ENCODE measurements at regions of chr1 and their contacts with region 1.

Region 1: DNA sequence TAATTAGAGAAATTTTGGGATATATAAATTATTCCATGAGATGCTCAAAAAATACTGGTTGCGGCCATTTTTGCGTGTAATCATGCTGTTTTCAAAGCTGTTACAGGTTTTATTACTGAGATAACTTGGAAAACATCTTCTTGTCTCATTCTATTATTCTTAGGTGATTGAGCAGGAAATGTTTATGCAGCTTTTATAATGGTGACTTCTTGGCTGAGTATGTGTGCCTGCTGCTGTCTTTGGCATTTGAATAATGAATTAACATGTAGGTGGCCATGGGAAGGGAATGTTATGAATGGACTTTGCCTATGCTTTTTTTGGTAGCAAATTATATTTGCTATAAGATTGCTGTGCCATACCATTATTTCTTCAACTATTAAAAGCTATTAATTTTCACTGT is 52.5 kb downstream of the RASAL2 start:
- DNase-seq: no peak
- ATAC-seq: no peak
- H3K4me3 ChIP-seq: no peak overlapping the region
- H3K27ac ChIP-seq: no peak overlapping the region
- H3K4me1 ChIP-seq: peaks cover 3% of the 10 kb centered on the region
- H3K27me3 ChIP-seq: no peaks in the 10 kb centered on the region
- CTCF ChIP-seq: no peak
- POLR2A ChIP-seq: no peak
- RAD21 ChIP-seq: no peak

Region 2: DNA sequence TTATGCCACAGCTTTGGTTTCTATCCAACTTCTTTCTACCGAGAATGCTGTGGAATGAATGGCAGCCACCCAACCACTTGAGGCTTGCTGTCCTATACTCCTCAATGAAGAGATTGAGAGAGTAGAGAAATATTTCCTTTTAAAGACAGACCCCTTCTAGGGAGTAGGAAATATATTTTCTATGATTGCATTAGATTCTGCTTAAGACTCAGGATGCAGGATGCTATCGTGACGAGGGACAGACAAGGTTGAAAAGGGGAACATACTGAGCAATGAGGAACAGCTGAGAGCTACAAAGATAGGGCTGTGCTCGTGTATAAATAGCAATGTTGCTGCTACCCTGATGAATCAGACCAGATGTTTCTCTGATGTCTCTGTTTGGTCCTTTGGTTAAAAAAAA is 59.7 kb before region 1 on chr1:
- CTCF ChIA-PET with region 1: no interaction called
- POLR2A ChIA-PET with region 1: no interaction called
- dilution Hi-C with region 1: no loop called
- in situ Hi-C with region 1: no loop called
- intact Hi-C with region 1: no loop called
- DNase-seq: peak; percentile 75
- ATAC-seq: peak; percentile 94
- H3K4me3 ChIP-seq: no peak overlapping the region
- H3K27ac ChIP-seq: no peak overlapping the region
- H3K4me1 ChIP-seq: no peaks in the 10 kb centered on the region
- H3K27me3 ChIP-seq: no peaks in the 10 kb centered on the region
- CTCF ChIP-seq: no peak
- POLR2A ChIP-seq: no peak
- RAD21 ChIP-seq: no peak

Region 3: GRCh38 chr1:178109348-178110143 is 36.9 kb before region 1 on chr1:
- CTCF ChIA-PET with region 1: no interaction called
- POLR2A ChIA-PET with region 1: no interaction called
- dilution Hi-C with region 1: no loop called
- in situ Hi-C with region 1: no loop called
- intact Hi-C with region 1: loop called (anchors 5 kb)
- DNase-seq: peak; percentile 63
- ATAC-seq: peak; percentile 61
- H3K4me3 ChIP-seq: no peak overlapping the region
- H3K27ac ChIP-seq: no peak overlapping the region
- H3K4me1 ChIP-seq: peaks cover 5% of the 10 kb centered on the region
- H3K27me3 ChIP-seq: no peaks in the 10 kb centered on the region
- CTCF ChIP-seq: no peak
- POLR2A ChIP-seq: no peak
- RAD21 ChIP-seq: no peak

Region 4: GRCh38 chr1:178209935-178210334 is 63.5 kb after region 1 on chr1:
- CTCF ChIA-PET with region 1: no interaction called
- POLR2A ChIA-PET with region 1: no interaction called
- dilution Hi-C with region 1: no loop called
- in situ Hi-C with region 1: no loop called
- intact Hi-C with region 1: no loop called
- DNase-seq: no peak
- ATAC-seq: no peak
- H3K4me3 ChIP-seq: no peak overlapping the region
- H3K27ac ChIP-seq: no peak overlapping the region
- H3K4me1 ChIP-seq: no peaks in the 10 kb centered on the region
- H3K27me3 ChIP-seq: no peaks in the 10 kb centered on the region
- CTCF ChIP-seq: no peak
- POLR2A ChIP-seq: no peak
- RAD21 ChIP-seq: no peak

Measured in IMR-90 (cell line).